Cardiac septum (tissue), 1 donor: ENCODE measurements at regions of chr17 and their contacts with region 1.

Region 1: DNA sequence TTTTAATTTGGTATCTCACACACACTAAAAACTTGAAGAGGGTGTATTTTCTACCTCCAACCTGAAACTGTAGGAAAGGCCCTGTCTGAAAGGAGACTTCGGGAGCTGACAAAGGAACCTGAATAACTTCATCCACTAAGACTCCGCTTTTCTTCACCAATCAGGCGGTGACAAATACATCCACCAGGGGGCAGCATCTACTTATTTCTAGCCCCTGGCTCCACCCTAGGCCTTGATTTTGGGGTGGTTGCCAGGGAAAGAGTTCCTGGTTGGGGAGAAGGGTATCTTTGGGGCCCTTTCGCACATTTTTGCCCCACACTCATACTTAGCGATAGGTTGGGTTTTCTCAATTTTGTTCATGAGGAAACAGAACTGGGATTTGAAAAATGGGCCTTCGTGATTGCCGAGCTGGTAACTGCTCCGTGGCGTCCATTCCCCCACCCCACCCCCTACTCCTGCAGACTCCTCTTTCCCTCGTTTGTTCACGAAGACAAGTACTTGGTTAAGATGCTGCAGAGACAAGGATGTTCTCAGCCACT is 4.8 kb upstream of the ARL4D start:
- DNase-seq: peak; percentile 89

Region 2: GRCh38 chr17:43024407-43025289 is 369.4 kb before region 1 on chr17 and contains the start of gene RND2:
- intact Hi-C with region 1: no loop called
- DNase-seq: peak; percentile 89
- total RNA-seq, gene RND2: 0.89 TPM

Region 3: DNA sequence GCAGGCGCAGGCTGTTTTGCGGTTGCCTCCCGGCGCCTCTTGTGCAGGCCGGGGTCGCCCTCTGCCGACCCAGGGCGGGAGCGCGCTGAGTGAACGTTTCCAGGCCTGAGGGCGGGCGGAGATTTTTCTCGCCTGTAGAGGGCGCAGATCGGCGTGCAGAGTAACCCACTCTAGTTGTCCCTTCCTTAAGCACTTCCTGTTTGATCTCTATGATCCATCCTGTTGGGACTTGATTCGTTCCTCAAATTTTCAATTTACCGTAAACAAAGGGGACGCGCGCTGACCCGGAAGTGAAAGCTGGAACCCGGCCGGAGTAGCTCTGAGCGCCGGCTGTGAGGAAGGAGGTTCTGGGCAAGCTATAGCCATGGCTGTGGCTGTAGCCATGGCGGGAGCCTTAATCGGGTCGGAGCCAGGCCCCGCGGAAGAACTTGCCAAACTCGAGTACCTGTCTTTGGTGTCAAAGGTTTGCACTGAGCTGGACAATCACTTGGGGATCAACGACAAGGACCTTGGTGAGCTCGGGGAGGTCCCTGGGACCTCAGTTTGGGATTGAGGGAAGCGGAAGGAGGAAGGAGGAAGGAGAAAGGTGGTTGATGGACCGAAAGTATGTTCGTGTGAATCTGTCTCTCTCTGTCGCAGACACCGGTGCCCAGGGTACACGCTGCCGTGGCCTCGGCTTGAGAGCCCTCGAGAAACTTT is 89.8 kb after region 1 on chr17 and contains the start of gene DHX8:
- intact Hi-C with region 1: loop called (anchors 1 kb)
- DNase-seq: peak; percentile 99
- total RNA-seq, gene DHX8: 32.7 TPM

Region 4: GRCh38 chr17:43517615-43518386 is 123.8 kb after region 1 on chr17:
- intact Hi-C with region 1: no loop called
- DNase-seq: no peak